Activated T-helper 1 cell treated with anti-CD3 and anti-CD28 coated beads, Interleukin-12 subunit alpha, Interleukin-12 subunit beta, Interleukin-2, Interleukin-4 antibody, amounts not matched to agents 30 ng/mL and 10 ng/mL and 1 ng/mL, durations not matched to agents 14 hours and 24 hours and 36 hours (primary cell): ENCODE measurements at regions of chr12 and their contacts with region 1.

Region 1: DNA sequence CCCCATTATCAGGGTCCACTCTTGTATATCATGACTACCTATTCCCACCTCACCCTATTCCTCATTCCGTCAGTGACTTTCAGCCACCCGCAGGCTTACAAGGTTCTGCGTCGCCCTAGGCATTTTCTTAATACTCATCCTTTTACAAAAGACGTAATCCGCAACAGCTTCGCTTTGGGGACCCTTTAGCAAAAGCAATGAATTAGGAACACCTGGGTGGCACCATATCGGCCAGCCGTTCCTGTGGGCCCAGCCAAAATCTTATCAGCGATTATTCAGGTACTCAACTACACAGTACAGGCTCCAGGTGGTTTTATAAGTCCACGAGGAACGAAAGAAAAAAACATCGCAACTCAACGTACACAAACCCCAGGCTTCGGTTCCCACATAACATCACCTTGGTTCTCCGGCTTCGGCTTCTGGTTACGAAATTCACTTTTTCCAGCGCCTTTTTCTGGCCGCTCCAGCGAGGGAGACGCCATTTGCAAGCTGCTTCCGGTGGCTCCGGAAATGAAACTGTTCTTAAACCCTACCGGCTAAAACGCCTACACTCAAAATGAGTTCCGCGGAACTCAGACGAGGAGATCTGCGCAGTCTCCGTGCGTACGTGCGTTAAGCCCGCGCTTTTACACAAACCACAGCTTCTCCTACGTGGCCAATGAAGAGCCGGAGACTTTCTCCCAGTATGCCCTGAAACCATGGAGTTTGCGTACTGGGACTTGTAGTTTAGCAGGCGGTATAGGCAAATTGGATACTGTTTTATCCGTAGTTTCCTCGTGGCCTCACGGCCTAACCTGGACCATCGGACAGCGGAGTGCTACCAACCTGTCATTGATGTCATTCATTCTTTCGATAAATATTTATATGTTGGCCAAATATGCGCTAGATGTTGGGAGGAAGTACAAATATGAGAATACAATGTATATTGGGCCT is at the start of gene KRR1:
- DNase-seq: peak; percentile 89
- H3K4me3 Mint-ChIP-seq: peak within 1 kb of the TSS; percentile 97
- H3K27ac Mint-ChIP-seq: peak within 1 kb of the TSS; percentile 98
- H3K4me1 Mint-ChIP-seq: peaks cover 45% of the 10 kb centered on the region
- H3K27me3 Mint-ChIP-seq: peaks cover 3% of the 10 kb centered on the region
- total RNA-seq, gene KRR1: 130 and 137 TPM in 2 replicates

Region 2: GRCh38 chr12:75086091-75087038 is 425.0 kb before region 1 on chr12:
- intact Hi-C with region 1: no loop called
- DNase-seq: no peak
- H3K4me3 Mint-ChIP-seq: no peak overlapping the region
- H3K27ac Mint-ChIP-seq: no peak overlapping the region
- H3K4me1 Mint-ChIP-seq: no peaks in the 10 kb centered on the region
- H3K27me3 Mint-ChIP-seq: no peaks in the 10 kb centered on the region

Region 3: GRCh38 chr12:75390899-75391538 is 120.4 kb before region 1 on chr12 and contains the start of gene GLIPR1L2:
- intact Hi-C with region 1: loop called (anchors 1 kb)
- DNase-seq: peak; percentile 82
- H3K4me3 Mint-ChIP-seq: peak within 1 kb of the TSS; percentile 86
- H3K27ac Mint-ChIP-seq: peak within 1 kb of the TSS; percentile 79
- H3K4me1 Mint-ChIP-seq: peaks cover 39% of the 10 kb centered on the region
- H3K27me3 Mint-ChIP-seq: peaks cover 5% of the 10 kb centered on the region
- total RNA-seq, gene GLIPR1L2: not detected in 2 replicates

Region 4: DNA sequence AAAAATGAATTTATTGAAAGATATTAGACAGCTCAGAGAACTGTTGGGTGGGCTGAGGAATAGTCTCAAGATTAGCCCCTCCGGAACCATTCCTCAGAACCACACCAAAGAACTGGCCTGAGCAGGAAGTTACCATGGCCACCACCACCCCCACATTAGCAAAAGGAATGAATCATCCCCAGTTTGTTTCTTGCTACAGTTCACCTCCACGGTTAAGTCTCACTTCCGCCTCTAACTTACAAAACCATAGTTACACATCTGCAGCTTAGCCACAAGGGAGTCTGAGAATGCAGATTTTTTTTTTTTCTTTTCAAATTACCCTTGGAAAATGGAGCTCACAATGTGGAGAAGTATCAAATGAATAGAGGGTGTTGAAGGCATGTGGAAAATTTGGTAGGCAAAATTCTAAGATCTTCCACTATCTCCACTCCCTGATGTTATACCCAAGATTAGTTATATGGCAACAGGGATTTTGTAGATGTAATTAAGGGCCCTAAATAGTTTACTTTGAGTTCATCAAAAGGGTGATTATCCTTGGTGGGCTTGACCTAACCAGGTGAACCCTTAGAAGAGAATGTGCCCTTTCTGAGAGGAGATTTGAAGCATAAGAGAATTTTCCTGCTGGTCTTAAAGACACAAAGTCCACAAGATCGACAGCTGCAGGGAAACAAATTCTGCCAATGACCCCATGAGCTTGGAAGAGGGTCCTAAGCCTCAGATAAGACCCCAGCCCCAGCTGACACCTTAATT is 129.8 kb after region 1 on chr12:
- intact Hi-C with region 1: loop called (anchors 2 kb)
- DNase-seq: peak; percentile 32
- H3K4me3 Mint-ChIP-seq: peak overlapping the region; percentile 19
- H3K27ac Mint-ChIP-seq: peak overlapping the region; percentile 89
- H3K4me1 Mint-ChIP-seq: peaks cover 34% of the 10 kb centered on the region
- H3K27me3 Mint-ChIP-seq: no peaks in the 10 kb centered on the region

Region 5: GRCh38 chr12:75792687-75793086 is 281.3 kb after region 1 on chr12:
- intact Hi-C with region 1: no loop called
- DNase-seq: no peak
- H3K4me3 Mint-ChIP-seq: no peak overlapping the region
- H3K27ac Mint-ChIP-seq: no peak overlapping the region
- H3K4me1 Mint-ChIP-seq: peaks cover 5% of the 10 kb centered on the region
- H3K27me3 Mint-ChIP-seq: peaks cover 23% of the 10 kb centered on the region

Region 6: DNA sequence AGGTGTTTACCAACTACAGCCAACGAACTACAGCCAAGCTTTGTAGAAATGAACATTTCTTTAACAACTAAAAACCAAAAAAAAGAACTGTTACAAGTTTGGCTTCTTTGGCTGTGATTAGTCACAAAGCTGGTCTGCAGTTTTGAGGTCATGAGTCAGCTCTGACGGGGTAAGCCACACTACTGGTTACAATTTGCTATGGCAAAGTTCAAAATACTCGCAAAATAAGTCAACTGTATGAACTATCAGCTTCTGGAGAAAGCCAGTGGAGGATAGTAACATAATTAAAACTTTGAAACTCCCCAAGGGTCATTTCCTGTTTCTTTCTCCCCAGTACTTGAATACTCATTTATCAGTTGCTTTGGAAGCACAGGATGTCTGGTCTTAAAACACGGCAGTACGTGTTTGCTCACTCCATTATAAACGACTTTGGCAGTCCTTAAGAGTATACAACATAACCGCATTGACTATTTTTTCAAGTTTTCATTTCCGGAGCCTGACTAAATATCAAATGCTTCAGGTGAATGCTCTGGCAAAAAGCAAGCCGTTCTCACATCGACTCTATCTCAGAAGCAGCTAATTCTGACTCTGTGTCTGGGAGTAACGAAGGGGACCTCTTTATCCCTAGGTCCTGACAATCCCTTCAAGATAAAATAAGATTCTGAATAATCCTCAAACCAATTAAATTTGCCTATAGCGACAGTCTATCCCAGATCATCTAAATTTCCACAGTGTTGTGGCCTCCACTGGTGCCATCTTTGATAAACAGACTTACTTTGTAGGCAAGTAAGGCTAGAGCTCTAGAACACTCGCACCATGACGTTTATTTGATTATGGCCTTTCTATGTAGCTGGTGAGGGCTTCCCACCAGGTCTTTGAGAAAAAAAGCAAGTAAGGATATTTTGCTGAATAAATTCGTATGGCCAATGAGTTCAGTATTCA is 509.6 kb after region 1 on chr12:
- intact Hi-C with region 1: loop called (anchors 2 kb)
- DNase-seq: peak; percentile 68
- H3K4me3 Mint-ChIP-seq: peak overlapping the region; percentile 74
- H3K27ac Mint-ChIP-seq: peak overlapping the region; percentile 99
- H3K4me1 Mint-ChIP-seq: peaks cover 73% of the 10 kb centered on the region
- H3K27me3 Mint-ChIP-seq: no peaks in the 10 kb centered on the region

Region 7: GRCh38 chr12:76763743-76764675 is 1252.6 kb after region 1 on chr12 and contains the start of gene ZDHHC17:
- intact Hi-C with region 1: loop called (anchors 1 kb)
- DNase-seq: peak; percentile 91
- H3K4me3 Mint-ChIP-seq: peak within 1 kb of the TSS; percentile 98
- H3K27ac Mint-ChIP-seq: peak within 1 kb of the TSS; percentile 94
- H3K4me1 Mint-ChIP-seq: peaks cover 19% of the 10 kb centered on the region
- H3K27me3 Mint-ChIP-seq: peaks cover 3% of the 10 kb centered on the region
- total RNA-seq, gene ZDHHC17: 23.3 and 32.3 TPM in 2 replicates